Cardiac septum (tissue), 1 donor: ENCODE measurements at regions of chrX and their contacts with region 1.

Region 1: DNA sequence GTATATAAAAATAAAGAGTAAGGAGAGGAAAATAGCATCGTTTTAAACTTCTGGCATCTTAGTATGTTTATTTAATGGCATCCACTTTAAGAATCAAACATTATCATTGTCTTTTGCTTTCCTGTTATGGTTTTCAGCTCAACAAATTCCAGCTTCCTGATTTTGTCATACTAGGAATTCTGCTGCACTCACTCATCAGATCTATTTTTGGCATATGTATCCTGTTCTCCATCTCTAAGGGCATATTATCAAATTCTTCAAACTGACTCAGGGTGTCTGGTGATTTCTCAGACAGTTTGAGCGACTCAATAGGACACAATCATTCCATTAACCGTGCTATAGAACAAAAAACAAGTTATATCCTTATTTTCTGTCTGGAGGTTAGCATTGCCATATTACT is 248.5 kb upstream of the DIAPH2 start:
- DNase-seq: no peak

Region 2: GRCh38 chrX:96311366-96311765 is 124.7 kb before region 1 on chrX:
- intact Hi-C with region 1: no loop called
- DNase-seq: no peak

Region 3: GRCh38 chrX:96394598-96394997 is 41.5 kb before region 1 on chrX:
- intact Hi-C with region 1: no loop called
- DNase-seq: no peak

Region 4: GRCh38 chrX:96684339-96685209 is 248.5 kb after region 1 on chrX and contains the start of gene DIAPH2:
- intact Hi-C with region 1: loop called (anchors 10 kb)
- DNase-seq: peak; percentile 85
- total RNA-seq, gene DIAPH2: 13.5 TPM

Region 5: GRCh38 chrX:96722781-96723180 is 286.7 kb after region 1 on chrX:
- intact Hi-C with region 1: no loop called
- DNase-seq: no peak